Naive thymus-derived CD4-positive, alpha-beta T cell (primary cell): ENCODE measurements at regions of chr17 and their contacts with region 1.

Region 1: DNA sequence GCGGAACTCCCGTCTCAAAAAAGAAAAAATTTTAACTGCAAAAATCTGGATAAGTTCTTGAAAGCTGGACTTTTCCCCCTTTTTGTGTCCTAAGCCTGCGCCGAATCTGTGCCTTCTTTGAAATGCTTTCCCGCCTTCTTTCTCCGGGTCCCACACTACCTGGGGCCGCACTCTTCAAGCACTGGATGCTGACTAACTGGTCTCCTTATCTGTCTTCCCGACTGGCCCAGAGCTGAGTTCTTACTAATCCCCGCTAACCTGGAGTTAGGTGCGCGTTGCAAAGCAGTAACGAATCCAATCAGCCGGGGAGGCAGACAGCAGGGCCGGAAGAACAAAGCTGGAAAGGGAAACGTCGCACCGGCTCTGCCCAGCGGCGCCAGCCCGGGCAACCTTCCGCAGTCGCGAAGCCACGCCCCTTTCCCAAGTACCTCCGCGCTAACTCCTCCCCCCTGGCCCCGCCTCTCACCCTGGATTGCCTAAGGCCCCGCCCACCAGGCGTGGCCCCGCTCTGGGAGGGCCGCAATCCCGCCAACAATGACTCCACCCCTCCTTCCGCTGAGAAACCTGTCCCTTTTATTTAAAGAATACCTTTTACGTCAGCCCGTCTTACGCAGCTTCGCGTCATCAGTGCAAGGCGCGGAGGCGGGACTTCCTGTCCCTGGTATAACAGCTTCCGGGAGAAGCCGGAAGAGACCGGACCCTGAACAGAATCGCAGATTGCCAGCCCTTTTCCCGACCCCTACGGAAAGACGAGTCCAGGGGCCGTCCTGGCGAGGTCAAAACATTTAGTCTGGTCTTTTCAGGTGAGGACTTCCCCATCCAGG is at the start of gene TMUB2:
- DNase-seq: peak; percentile 99 to 100 (median 100)
- ATAC-seq: peak; percentile 99
- H3K4me3 ChIP-seq: peak within 1 kb of the TSS; percentile 100
- H3K4me3 Mint-ChIP-seq: peak within 1 kb of the TSS; percentile 94 to 100 (median 98)
- H3K27ac ChIP-seq: peak within 1 kb of the TSS; percentile 99
- H3K27ac Mint-ChIP-seq: peak within 1 kb of the TSS; percentile 97 to 100 (median 100)
- H3K4me1 ChIP-seq: peaks cover 23 to 35% of the 10 kb centered on the region in 2 donors
- H3K4me1 Mint-ChIP-seq: peaks cover 41 to 68% (median 51%) of the 10 kb centered on the region in 7 donors
- H3K27me3 ChIP-seq: no peaks in the 10 kb centered on the region
- H3K27me3 Mint-ChIP-seq: no peaks in the 10 kb centered on the region
- total RNA-seq, gene TMUB2: 34.9 to 56.0 (median 41.6) TPM

Region 2: DNA sequence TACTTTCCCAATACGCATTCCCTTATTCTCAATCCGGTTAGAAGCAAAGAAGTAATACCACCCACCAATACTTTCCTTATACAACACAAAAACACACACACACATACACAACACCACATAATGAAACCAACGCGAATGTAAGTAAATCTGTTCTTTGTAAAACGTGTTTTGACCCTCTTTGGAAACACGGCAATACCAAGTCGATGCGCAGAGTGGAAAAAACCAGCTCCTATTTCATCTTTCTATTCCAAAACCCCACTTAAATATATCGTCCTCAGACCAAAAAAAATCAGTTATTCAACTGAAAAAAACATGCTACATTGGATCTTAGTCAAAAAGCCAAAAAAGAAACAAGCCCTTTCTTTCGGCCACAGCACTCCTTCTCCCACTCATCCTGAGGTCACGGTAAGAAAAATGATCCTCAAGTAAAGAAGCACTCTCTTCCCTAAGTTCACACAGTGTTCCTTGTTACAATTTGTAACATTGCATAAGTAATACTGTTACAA is 818.7 kb before region 1 on chr17:
- CTCF ChIA-PET with region 1: no interaction called
- POLR2A ChIA-PET with region 1: no interaction called
- intact Hi-C with region 1: loop called in 1 of 2 experiments (anchors 5 kb)
- DNase-seq: peak in 4 of 9 donors; percentile 31 to 80 (median 70)
- ATAC-seq: peak; percentile 72
- H3K4me3 ChIP-seq: peak overlapping the region; percentile 75
- H3K4me3 Mint-ChIP-seq: peak overlapping the region; percentile 85 to 99 (median 92)
- H3K27ac ChIP-seq: peak overlapping the region; percentile 93
- H3K27ac Mint-ChIP-seq: peak overlapping the region; percentile 99 to 100 (median 100)
- H3K4me1 ChIP-seq: peaks cover 8 to 19% of the 10 kb centered on the region in 2 donors
- H3K4me1 Mint-ChIP-seq: peaks cover 31 to 65% (median 59%) of the 10 kb centered on the region in 7 donors
- H3K27me3 ChIP-seq: no peaks in the 10 kb centered on the region
- H3K27me3 Mint-ChIP-seq: no peaks in the 10 kb centered on the region

Region 3: DNA sequence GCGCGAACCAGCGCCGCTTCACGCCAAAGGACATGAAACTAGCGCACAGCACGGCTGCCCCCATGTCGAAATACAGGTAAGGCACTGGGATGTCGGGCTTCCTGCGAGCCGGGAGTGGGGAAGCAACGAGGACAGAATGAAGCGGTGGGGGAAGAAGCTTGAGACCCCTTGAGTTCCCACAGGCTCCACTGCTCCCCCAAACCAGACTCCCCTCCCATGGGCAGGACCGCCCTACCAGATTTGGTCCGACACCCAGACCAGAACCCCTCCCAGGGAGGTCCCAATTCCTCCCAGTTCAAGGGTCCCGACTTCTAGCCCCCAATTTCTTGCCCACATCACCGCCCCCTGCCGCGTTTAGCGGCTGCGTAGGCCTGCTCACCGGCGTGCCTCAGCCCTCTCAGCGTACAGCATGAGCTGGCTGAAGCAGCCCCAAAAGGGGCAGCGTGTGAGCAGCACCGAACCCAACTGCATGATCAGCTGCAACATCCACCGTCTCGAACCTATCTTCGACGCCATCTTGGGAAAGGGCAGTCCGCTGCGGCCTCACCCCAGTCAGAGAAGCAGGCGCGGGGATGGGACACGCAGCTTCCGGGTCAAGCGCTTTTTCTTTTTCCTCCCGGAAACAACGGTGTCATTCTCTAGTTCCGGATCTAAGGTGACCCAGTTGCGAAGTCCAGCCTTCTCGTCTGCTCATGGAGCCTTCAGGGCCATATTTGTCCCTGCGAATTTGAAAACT is 171.9 kb before region 1 on chr17 and contains the start of gene TMEM101:
- CTCF ChIA-PET with region 1: no interaction called
- POLR2A ChIA-PET with region 1: interaction called, 4 read pairs
- intact Hi-C with region 1: loop called (anchors 2 to 10 kb)
- DNase-seq: peak; percentile 63 to 90 (median 82)
- ATAC-seq: peak; percentile 99
- H3K4me3 ChIP-seq: peak within 1 kb of the TSS; percentile 96
- H3K4me3 Mint-ChIP-seq: peak within 1 kb of the TSS; percentile 93 to 100 (median 98)
- H3K27ac ChIP-seq: peak within 1 kb of the TSS; percentile 73
- H3K27ac Mint-ChIP-seq: peak within 1 kb of the TSS; percentile 84 to 99 (median 95)
- H3K4me1 ChIP-seq: peaks cover 8 to 9% of the 10 kb centered on the region in 2 donors
- H3K4me1 Mint-ChIP-seq: peaks cover 7 to 23% (median 11%) of the 10 kb centered on the region in 7 donors
- H3K27me3 ChIP-seq: no peaks in the 10 kb centered on the region
- H3K27me3 Mint-ChIP-seq: peaks cover 0 to under 1% (median 0%) of the 10 kb centered on the region in 5 donors
- total RNA-seq, gene TMEM101: 12.1 to 32.0 (median 30.5) TPM

Region 4: DNA sequence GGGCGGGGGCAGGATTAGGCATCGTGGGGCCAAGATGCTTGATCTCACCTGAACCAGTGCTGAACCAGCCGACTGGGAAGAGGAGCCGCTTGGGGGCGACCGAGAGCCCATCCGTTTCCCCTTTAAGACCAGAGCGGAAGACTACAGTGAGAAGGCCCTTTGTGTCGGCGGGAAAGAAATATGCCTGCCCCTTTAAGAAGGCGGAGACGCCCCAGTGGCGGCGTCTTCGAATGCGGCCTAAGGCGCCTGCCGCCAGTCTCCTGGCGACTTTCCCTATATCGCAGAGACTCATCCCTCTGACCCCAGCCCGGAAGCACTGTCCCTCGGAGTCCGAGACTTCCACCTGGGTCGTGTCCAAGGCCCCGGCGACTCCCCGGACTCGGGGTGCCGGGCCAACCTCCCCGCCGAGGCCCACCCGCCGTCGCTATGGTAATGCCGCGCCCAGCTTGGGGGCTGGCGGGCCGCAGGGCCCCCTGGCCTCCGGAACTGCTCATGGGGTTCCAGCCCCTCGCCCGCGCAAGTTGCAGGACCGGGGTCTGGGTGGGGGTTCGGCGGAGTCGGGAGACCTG is 44.7 kb before region 1 on chr17 and contains the start of gene HROB:
- CTCF ChIA-PET with region 1: no interaction called
- POLR2A ChIA-PET with region 1: interaction called, 5 read pairs
- intact Hi-C with region 1: loop called (anchors 1 kb)
- DNase-seq: peak; percentile 96 to 100 (median 98)
- ATAC-seq: peak; percentile 98
- H3K4me3 ChIP-seq: peak within 1 kb of the TSS; percentile 84
- H3K4me3 Mint-ChIP-seq: peak within 1 kb of the TSS; percentile 82 to 89 (median 84)
- H3K27ac ChIP-seq: peak within 1 kb of the TSS; percentile 84
- H3K27ac Mint-ChIP-seq: peak within 1 kb of the TSS; percentile 65 to 91 (median 87)
- H3K4me1 ChIP-seq: peaks cover 0 to 9% of the 10 kb centered on the region in 2 donors
- H3K4me1 Mint-ChIP-seq: peaks cover 0 to 32% (median 12%) of the 10 kb centered on the region in 7 donors
- H3K27me3 ChIP-seq: no peaks in the 10 kb centered on the region
- H3K27me3 Mint-ChIP-seq: peaks cover 0 to 5% (median 0%) of the 10 kb centered on the region in 5 donors
- total RNA-seq, gene HROB: 0.76 to 12.3 (median 2.1) TPM

Region 5: GRCh38 chr17:44210342-44211192 is 24.0 kb after region 1 on chr17:
- CTCF ChIA-PET with region 1: interaction called, 25 read pairs
- POLR2A ChIA-PET with region 1: interaction called, 19 read pairs
- intact Hi-C with region 1: no loop called
- DNase-seq: peak; percentile 82 to 97 (median 93)
- ATAC-seq: peak; percentile 99
- H3K4me3 ChIP-seq: no peak overlapping the region
- H3K4me3 Mint-ChIP-seq: peak overlapping the region; percentile 16 to 77 (median 60)
- H3K27ac ChIP-seq: peak overlapping the region; percentile 68
- H3K27ac Mint-ChIP-seq: peak overlapping the region; percentile 52 to 90 (median 81)
- H3K4me1 ChIP-seq: peaks cover 25 to 47% of the 10 kb centered on the region in 2 donors
- H3K4me1 Mint-ChIP-seq: peaks cover 30 to 67% (median 50%) of the 10 kb centered on the region in 7 donors
- H3K27me3 ChIP-seq: no peaks in the 10 kb centered on the region
- H3K27me3 Mint-ChIP-seq: no peaks in the 10 kb centered on the region

Region 6: GRCh38 chr17:44308320-44308818 is 121.8 kb after region 1 on chr17 and contains the start of gene RUNDC3A:
- CTCF ChIA-PET with region 1: interaction called, 6 read pairs
- POLR2A ChIA-PET with region 1: interaction called, 10 read pairs
- intact Hi-C with region 1: no loop called
- DNase-seq: peak; percentile 75 to 90 (median 85)
- ATAC-seq: peak; percentile 99
- H3K4me3 ChIP-seq: no peak within 1 kb of the TSS
- H3K4me3 Mint-ChIP-seq: peak within 1 kb of the TSS; percentile 42 to 84 (median 63)
- H3K27ac ChIP-seq: no peak within 1 kb of the TSS
- H3K27ac Mint-ChIP-seq: peak within 1 kb of the TSS in 3 of 9 donors; percentile 13 to 75 (median 71)
- H3K4me1 ChIP-seq: peaks cover 0 to 5% of the 10 kb centered on the region in 2 donors
- H3K4me1 Mint-ChIP-seq: peaks cover 14 to 27% (median 15%) of the 10 kb centered on the region in 7 donors
- H3K27me3 ChIP-seq: no peaks in the 10 kb centered on the region
- H3K27me3 Mint-ChIP-seq: peaks cover 28 to 57% (median 32%) of the 10 kb centered on the region in 5 donors
- total RNA-seq, gene RUNDC3A: 0.08 to 0.22 TPM in 2 of 5 experiments, not detected in the others

Region 7: DNA sequence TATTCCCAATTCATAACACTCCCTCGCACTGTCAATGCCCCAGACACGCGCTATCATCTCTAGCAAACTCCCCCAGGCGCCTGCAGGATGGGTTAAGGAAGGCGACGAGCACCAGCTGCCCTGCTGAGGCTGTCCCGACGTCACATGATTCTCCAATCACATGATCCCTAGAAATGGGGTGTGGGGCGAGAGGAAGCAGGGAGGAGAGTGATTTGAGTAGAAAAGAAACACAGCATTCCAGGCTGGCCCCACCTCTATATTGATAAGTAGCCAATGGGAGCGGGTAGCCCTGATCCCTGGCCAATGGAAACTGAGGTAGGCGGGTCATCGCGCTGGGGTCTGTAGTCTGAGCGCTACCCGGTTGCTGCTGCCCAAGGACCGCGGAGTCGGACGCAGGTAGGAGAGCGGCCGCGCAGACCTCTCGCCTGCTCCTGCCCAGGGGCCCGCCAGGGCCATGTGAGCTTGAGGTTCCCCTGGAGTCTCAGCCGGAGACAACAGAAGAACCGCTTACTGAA is 158.5 kb after region 1 on chr17 and contains the start of gene GRN:
- CTCF ChIA-PET with region 1: interaction called, 4 read pairs
- POLR2A ChIA-PET with region 1: no interaction called
- intact Hi-C with region 1: loop called in 1 of 2 experiments (anchors 1 kb)
- DNase-seq: peak; percentile 67 to 85 (median 81)
- ATAC-seq: peak; percentile 96
- H3K4me3 ChIP-seq: peak within 1 kb of the TSS; percentile 88
- H3K4me3 Mint-ChIP-seq: peak within 1 kb of the TSS; percentile 88 to 96 (median 93)
- H3K27ac ChIP-seq: peak within 1 kb of the TSS; percentile 71
- H3K27ac Mint-ChIP-seq: peak within 1 kb of the TSS; percentile 42 to 88 (median 79)
- H3K4me1 ChIP-seq: peaks cover 6% of the 10 kb centered on the region in 2 donors
- H3K4me1 Mint-ChIP-seq: peaks cover 8 to 28% (median 19%) of the 10 kb centered on the region in 7 donors
- H3K27me3 ChIP-seq: no peaks in the 10 kb centered on the region
- H3K27me3 Mint-ChIP-seq: peaks cover 0 to 21% (median 7%) of the 10 kb centered on the region in 5 donors
- total RNA-seq, gene GRN: 49.5 to 374 (median 52.2) TPM